Heart right ventricle (tissue), 16 donors: ENCODE measurements at regions of chr13 and their contacts with region 1.

Region 1: GRCh38 chr13:33125821-33126570 is 109.8 kb downstream of the KL start:
- DNase-seq: peak; percentile 41 to 80
- ATAC-seq: peak; percentile 83 to 93 (median 87)
- H3K4me3 ChIP-seq: peak overlapping the region in 2 of 10 donors; percentile 20 to 21
- H3K27ac ChIP-seq: peak overlapping the region; percentile 29 to 91 (median 80)
- H3K4me1 ChIP-seq: peaks cover 10 to 84% (median 69%) of the 10 kb centered on the region in 9 donors
- H3K27me3 ChIP-seq: no peaks in the 10 kb centered on the region
- CTCF ChIP-seq: no peak

Region 2: DNA sequence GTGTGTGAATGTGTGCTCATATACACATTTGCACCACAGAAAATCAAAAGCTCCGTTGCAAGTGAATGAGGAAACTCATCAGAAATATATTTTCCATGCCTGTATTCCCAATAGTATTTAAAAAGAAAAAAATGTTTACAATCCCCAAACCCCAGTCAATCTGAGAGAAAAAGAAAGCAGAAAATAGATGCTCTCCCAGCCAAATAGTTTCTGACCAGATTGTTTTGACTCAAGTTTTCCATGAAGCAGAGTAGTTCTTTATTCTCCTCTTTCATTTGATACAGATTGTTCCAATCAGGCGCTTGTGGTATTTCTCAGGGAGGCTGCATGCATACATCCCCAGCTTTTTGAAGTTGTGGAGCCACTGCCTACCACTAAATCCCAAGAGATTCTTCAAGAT is 48.9 kb after region 1 on chr13:
- intact Hi-C with region 1: loop called in 1 of 10 experiments (anchors 5 kb)
- DNase-seq: no peak
- ATAC-seq: peak in 4 of 8 donors; percentile 30 to 58 (median 40)
- H3K4me3 ChIP-seq: no peak overlapping the region
- H3K27ac ChIP-seq: peak overlapping the region in 4 of 10 donors; percentile 9 to 30 (median 28)
- H3K4me1 ChIP-seq: peaks cover 0 to 84% (median 44%) of the 10 kb centered on the region in 9 donors
- H3K27me3 ChIP-seq: no peaks in the 10 kb centered on the region
- CTCF ChIP-seq: no peak

Region 3: DNA sequence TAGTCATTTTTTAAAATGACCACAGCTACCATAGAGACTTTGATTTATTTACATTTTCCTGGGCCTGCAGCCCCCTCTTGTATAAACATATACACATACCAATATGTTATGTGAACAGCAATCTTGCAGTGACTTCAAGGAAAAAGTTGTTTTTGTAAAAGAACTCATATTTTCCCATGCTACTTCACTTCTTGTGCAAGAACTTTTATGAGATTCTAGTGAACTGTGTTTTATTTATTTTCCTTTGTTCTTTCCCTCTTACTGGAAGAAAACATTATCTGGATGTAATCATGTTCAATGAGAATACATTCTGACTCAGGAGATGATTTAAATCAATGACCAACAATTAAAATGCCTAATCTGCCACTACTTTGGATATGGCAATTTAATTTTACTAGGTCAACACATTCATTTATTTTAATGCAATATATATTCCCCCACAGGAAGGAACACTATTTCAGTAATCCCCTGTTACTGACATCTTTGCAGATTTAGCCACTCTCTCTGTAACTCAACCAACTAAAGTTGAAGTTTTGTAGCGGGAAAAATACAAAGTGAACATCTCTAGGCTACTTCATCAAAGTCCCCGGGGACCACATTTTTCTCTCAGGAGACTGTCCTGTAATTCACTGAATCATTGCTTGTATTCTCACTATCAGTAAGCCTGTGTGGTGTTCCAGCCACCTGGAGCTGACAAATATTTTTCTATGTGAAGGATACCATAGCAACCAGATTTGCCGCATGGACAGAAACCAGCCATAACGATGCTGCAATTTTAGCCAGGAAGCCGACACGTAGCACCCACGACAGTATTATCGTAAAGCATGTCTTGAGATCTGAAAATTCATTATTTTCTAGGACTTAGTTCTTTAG is 69.1 kb after region 1 on chr13:
- intact Hi-C with region 1: loop called in 2 of 10 experiments (anchors 5 kb)
- DNase-seq: peak in 1 of 2 donors; percentile 51
- ATAC-seq: peak in 7 of 8 donors; percentile 8 to 76 (median 49)
- H3K4me3 ChIP-seq: no peak overlapping the region
- H3K27ac ChIP-seq: peak overlapping the region in 8 of 10 donors; percentile 11 to 64 (median 54)
- H3K4me1 ChIP-seq: peaks cover 16 to 97% (median 70%) of the 10 kb centered on the region in 9 donors
- H3K27me3 ChIP-seq: no peaks in the 10 kb centered on the region
- CTCF ChIP-seq: no peak

Region 4: DNA sequence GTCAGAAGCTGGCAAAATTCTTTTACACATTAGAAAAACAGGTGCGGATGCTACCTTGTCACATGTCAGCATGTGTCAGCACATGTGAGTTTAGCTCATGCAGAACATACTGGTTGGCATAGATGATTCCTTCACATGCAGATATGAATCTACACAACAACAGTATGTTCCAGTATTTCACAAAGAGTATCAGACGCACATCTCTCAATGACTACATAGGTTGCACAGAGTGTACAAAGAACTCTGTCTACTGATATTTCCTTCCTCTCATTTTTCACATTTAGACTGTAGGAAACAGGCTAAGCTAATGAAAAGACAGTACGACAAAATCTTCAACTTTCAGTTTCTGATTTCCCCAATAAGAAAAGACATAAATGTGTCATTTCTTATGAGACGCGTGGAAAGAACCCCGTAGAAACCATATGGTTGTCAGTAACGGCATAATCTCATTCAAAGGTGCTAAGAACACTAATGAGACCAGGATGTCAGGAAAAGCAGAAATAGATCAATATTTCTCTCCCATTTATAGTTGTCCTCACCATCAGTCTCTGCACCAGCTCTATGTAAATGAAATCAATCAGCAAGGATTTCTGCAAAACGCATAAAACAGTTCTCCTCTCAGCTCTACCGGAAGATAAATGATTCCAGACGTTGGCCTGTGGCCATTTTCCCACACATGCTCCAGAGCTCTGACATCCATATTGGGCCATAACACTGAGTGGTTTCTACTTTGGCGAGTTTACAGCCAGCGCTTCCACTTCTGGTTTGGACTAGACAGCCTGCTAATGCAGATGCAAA is 78.3 kb after region 1 on chr13:
- intact Hi-C with region 1: loop called in 2 of 10 experiments (anchors 5 kb)
- DNase-seq: peak; percentile 50 to 87
- ATAC-seq: peak; percentile 73 to 89 (median 82)
- H3K4me3 ChIP-seq: peak overlapping the region in 9 of 10 donors; percentile 21 to 54 (median 44)
- H3K27ac ChIP-seq: peak overlapping the region; percentile 54 to 87 (median 80)
- H3K4me1 ChIP-seq: peaks cover 27 to 99% (median 82%) of the 10 kb centered on the region in 9 donors
- H3K27me3 ChIP-seq: no peaks in the 10 kb centered on the region
- CTCF ChIP-seq: no peak

Region 5: DNA sequence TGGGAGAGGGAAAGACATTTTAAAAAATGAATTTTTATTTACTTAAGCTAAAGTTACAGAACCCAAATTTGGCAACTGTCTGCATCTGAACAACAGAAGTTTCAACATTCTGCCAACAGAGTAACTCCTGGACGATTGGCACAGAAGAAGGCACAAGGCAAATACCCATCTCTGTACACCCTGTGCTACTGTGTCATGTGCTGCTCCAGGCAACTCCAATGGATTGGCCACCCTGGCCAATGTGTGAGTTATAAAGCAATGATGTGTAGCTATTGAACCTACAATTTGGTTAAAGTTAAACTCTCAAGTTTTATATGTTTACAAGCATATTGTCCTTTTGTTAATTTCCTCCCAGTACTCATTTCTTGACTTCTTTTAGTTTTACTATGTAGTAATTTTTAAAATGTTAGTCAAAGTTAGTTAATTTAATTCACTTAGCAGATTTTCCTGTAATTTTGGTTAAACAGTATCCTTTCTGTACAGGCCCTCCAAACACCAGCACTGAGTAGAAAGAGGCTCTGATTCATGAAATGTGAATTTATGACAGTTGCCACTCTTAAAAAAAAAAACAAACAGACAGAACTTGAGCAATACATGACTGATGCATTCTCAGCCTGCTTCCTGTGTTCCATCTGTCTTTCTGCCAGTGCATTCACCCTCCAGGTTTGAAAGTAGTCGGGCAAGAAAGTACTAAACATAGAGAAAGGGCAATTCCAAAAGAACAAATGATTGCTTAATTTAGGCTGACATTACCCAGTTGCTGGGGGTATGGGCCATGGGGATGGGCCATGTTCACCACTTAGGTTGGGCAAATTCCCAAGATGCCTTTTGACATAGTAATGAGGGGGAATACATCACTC is 153.6 kb after region 1 on chr13:
- intact Hi-C with region 1: loop called in 2 of 10 experiments (anchors 10 kb)
- DNase-seq: no peak
- ATAC-seq: peak in 4 of 8 donors; percentile 38 to 85 (median 53)
- H3K4me3 ChIP-seq: no peak overlapping the region
- H3K27ac ChIP-seq: peak overlapping the region; percentile 29 to 83 (median 64)
- H3K4me1 ChIP-seq: peaks cover 15 to 98% (median 86%) of the 10 kb centered on the region in 9 donors
- H3K27me3 ChIP-seq: no peaks in the 10 kb centered on the region
- CTCF ChIP-seq: no peak

Region 6: GRCh38 chr13:33285420-33286124 is 159.6 kb after region 1 on chr13 and contains the start of gene STARD13:
- intact Hi-C with region 1: loop called in 2 of 10 experiments (anchors 1 to 10 kb)
- DNase-seq: peak; percentile 89 to 97
- ATAC-seq: peak; percentile 95 to 97 (median 96)
- H3K4me3 ChIP-seq: peak within 1 kb of the TSS; percentile 59 to 84 (median 72)
- H3K27ac ChIP-seq: peak within 1 kb of the TSS; percentile 84 to 98 (median 95)
- H3K4me1 ChIP-seq: peaks cover 5 to 60% (median 47%) of the 10 kb centered on the region in 9 donors
- H3K27me3 ChIP-seq: no peaks in the 10 kb centered on the region
- CTCF ChIP-seq: peak; percentile 15 to 69 (median 40)
- total RNA-seq, gene STARD13: 18.2 to 38.3 (median 28.5) TPM